Panc1 (cell line): ENCODE measurements at regions of chr12 and their contacts with region 1.

Region 1: GRCh38 chr12:92848718-92849117 is 80.4 kb downstream of the EEA1 start:
- DNase-seq: no peak
- ATAC-seq: no peak
- H3K4me3 ChIP-seq: no peak overlapping the region
- H3K27ac ChIP-seq: no peak overlapping the region
- H3K4me1 ChIP-seq: no peaks in the 10 kb centered on the region
- H3K27me3 ChIP-seq: no peaks in the 10 kb centered on the region
- CTCF ChIP-seq: no peak

Region 2: GRCh38 chr12:92821142-92821541 is 27.6 kb before region 1 on chr12:
- CTCF ChIA-PET with region 1: interaction called, 15 read pairs
- POLR2A ChIA-PET with region 1: no interaction called
- in situ Hi-C with region 1: no loop called
- intact Hi-C with region 1: no loop called
- DNase-seq: no peak
- ATAC-seq: no peak
- H3K4me3 ChIP-seq: no peak overlapping the region
- H3K27ac ChIP-seq: no peak overlapping the region
- H3K4me1 ChIP-seq: no peaks in the 10 kb centered on the region
- H3K27me3 ChIP-seq: no peaks in the 10 kb centered on the region
- CTCF ChIP-seq: no peak

Region 3: DNA sequence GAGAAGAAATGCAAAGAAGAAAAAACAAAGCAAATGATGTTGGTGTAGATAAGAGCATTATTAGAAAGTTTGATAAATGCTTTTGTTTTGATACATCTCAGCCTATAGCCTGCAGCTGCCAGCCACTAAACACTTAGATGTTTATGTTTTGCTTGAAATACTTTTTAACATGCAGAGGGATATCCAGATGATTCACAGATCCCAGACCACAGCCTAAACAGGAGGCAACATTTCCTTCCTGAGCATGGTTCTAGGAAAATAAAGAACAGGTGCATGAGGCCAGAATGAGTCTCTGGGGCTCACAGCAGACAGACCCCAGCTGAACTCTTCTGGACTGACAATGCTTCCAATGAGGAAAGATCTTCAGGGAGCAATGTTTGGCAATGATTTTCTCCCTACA is 184.0 kb after region 1 on chr12:
- CTCF ChIA-PET with region 1: no interaction called
- POLR2A ChIA-PET with region 1: no interaction called
- in situ Hi-C with region 1: no loop called
- intact Hi-C with region 1: no loop called
- DNase-seq: no peak
- ATAC-seq: no peak
- H3K4me3 ChIP-seq: no peak overlapping the region
- H3K27ac ChIP-seq: no peak overlapping the region
- H3K4me1 ChIP-seq: no peaks in the 10 kb centered on the region
- H3K27me3 ChIP-seq: peaks cover 5% of the 10 kb centered on the region; the same call in 1 of the 2 replicates
- CTCF ChIP-seq: no peak